ENCODE measurements at regions of chr2 and their contacts with region 1.

Region 1: GRCh38 chr2:157055660-157056199 is 201.8 kb upstream of the GALNT5 start:
- DNase-seq: peak; percentile 58
- ATAC-seq: no peak
- H3K4me3 ChIP-seq: no peak overlapping the region
- H3K27ac ChIP-seq: peak overlapping the region; percentile 38
- H3K4me1 ChIP-seq: peaks cover 20% of the 10 kb centered on the region
- H3K27me3 ChIP-seq: no peaks in the 10 kb centered on the region
- CTCF ChIP-seq: peak; percentile 80

Region 2: GRCh38 chr2:155708071-155708470 is 1347.7 kb before region 1 on chr2:
- CTCF ChIA-PET with region 1: no interaction called
- POLR2A ChIA-PET with region 1: no interaction called
- intact Hi-C with region 1: loop called (anchors 10 kb)
- DNase-seq: peak; percentile 20
- ATAC-seq: peak; percentile 64
- H3K4me3 ChIP-seq: no peak overlapping the region
- H3K27ac ChIP-seq: no peak overlapping the region
- H3K4me1 ChIP-seq: no peaks in the 10 kb centered on the region
- H3K27me3 ChIP-seq: 0 out of 2 replicates have a peak, but pooled peaks cover 4% of the 10 kb centered on the region
- CTCF ChIP-seq: peak; percentile 47; the same call in 1 of the 2 replicates

Region 3: DNA sequence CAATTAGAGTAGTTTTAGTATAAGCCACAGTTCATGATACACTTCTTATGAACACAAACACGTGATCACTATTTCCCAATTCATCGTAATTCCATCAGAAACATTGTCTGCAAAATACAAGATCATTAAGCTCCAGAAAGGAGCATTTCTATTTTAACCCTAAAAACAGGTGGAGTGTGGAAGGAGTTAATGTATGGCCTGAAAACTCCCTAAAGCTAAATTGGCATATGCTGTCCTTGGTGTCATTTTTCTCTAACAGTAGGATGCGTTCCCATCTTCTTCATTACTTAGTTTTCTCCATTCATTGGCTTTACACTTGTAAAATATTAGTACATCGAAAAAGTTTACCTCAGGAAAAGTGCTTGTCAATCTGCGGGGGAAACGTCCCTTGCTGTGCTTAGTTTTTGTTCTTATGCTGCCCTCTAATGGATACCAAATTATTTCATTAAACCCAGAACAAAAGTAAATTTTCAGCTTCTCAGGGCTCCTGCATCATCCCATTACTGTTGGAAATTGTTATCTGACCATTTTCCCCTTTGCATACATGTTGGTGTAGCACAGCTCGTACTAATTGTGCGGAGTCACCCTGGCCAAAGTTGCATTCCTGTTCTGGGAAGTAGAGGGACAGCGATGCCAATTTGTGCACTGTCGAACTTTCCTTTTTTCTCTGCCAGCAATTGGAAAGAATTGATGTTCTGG is 466.2 kb before region 1 on chr2:
- CTCF ChIA-PET with region 1: interaction called, 4 read pairs
- POLR2A ChIA-PET with region 1: no interaction called
- intact Hi-C with region 1: loop called (anchors 2 kb)
- DNase-seq: peak; percentile 67
- ATAC-seq: peak; percentile 76
- H3K4me3 ChIP-seq: no peak overlapping the region
- H3K27ac ChIP-seq: no peak overlapping the region
- H3K4me1 ChIP-seq: no peaks in the 10 kb centered on the region
- H3K27me3 ChIP-seq: no peaks in the 10 kb centered on the region
- CTCF ChIP-seq: peak; percentile 77

Region 4: DNA sequence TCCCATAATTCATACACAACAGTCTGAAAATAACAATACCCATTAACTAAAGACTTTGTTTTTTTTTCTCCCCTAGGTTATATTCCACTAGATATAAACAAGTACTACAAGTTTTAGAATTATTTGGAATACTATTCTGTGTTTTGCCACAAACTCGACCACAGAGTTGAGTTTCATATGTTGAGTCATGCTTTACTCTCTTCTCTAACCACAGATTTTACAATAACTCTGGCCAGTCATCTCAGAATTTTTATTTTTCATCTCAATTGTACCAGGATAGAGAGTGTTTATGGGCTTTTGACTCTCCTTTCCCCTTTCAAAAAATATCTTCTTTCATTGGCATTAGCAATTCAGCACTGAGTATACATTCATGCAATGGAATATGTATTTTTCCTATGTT is 146.9 kb before region 1 on chr2:
- CTCF ChIA-PET with region 1: no interaction called
- POLR2A ChIA-PET with region 1: no interaction called
- intact Hi-C with region 1: loop called (anchors 1 kb)
- DNase-seq: peak; percentile 89
- ATAC-seq: peak; percentile 90
- H3K4me3 ChIP-seq: no peak overlapping the region
- H3K27ac ChIP-seq: peak overlapping the region; percentile 70
- H3K4me1 ChIP-seq: peaks cover 28% of the 10 kb centered on the region
- H3K27me3 ChIP-seq: no peaks in the 10 kb centered on the region
- CTCF ChIP-seq: no peak

Region 5: DNA sequence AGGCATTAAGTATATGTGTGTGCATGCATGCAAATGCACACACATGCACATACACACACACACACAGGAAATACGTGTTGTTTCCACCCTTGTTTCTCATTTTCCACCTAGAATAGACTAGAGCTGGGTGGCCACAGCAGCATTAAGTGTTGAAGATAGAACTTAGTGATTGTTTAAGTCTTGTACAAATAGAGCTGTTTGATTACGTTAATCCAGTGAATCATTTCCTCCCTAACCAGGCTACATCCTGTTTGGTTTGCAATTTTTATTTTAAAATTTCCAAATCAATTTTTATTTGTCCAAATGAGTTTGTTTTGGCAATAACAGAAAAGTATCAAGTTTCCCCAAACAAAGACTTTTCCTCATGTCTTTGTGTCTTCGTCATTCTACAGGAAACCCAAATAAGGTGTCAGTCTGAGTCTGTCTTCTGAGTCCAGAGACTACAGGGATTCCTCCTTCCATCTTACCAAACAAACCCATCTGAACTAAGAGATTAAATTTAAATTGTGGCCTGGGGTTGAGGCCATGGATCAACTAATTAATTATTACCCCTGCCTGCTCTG is 127.2 kb after region 1 on chr2:
- CTCF ChIA-PET with region 1: interaction called, 4 read pairs
- POLR2A ChIA-PET with region 1: no interaction called
- intact Hi-C with region 1: loop called (anchors 2 kb)
- DNase-seq: peak; percentile 95
- ATAC-seq: peak; percentile 95
- H3K4me3 ChIP-seq: no peak overlapping the region; the same call in 1 of the 2 replicates
- H3K27ac ChIP-seq: peak overlapping the region; percentile 82
- H3K4me1 ChIP-seq: peaks cover 13% of the 10 kb centered on the region
- H3K27me3 ChIP-seq: no peaks in the 10 kb centered on the region
- CTCF ChIP-seq: no peak

Measured in PC-3 (cell line).